ENCODE measurements at regions of chr11 and their contacts with region 1.

Region 1: GRCh38 chr11:33273656-33274055 is 16.5 kb downstream of the HIPK3 start:
- DNase-seq: no peak
- ATAC-seq: no peak
- H3K4me3 ChIP-seq: no peak overlapping the region
- H3K4me3 Mint-ChIP-seq: no peak overlapping the region
- H3K27ac ChIP-seq: no peak overlapping the region
- H3K27ac Mint-ChIP-seq: no peak overlapping the region
- H3K4me1 ChIP-seq: peaks cover 0 to 7% of the 10 kb centered on the region in 2 donors
- H3K4me1 Mint-ChIP-seq: peaks cover 43% of the 10 kb centered on the region
- H3K27me3 ChIP-seq: no peaks in the 10 kb centered on the region
- H3K27me3 Mint-ChIP-seq: no peaks in the 10 kb centered on the region
- CTCF ChIP-seq: no peak

Region 2: DNA sequence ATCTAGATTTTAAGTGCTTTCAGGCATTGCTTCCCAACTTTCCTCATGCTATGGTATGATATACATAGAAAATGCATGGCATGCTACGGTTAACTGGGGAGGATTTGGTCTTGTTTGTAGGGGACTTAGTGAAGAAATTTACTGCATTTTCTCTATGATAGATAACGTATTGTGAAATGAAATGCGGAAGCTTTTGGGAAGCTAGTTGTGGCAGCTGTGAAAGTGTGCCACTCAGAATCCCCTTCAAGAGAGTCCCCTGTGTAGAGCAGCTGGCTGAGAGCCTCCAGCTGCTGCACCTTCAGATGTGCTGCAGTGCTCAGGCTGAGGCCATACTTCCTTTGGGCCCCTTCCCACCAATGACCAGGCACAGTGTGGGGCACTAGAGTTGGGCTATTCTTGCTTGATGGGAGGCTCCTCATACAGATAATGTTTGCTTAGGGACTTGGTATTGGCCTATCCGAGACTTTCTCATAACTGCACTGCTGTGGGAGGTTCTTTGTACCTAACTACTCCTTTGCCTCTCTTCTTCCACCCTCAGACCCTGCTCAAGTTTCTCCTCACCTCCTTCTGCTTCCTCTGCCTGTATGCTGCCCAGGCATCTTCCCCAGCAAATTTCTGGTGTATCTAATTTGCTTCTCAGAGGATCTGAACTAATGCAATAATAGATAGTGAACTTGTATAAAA is 50.8 kb after region 1 on chr11:
- CTCF ChIA-PET with region 1: interaction called, 3 read pairs
- POLR2A ChIA-PET with region 1: no interaction called
- intact Hi-C with region 1: loop called (anchors 5 kb)
- DNase-seq: peak; percentile 13
- ATAC-seq: no peak
- H3K4me3 ChIP-seq: no peak overlapping the region
- H3K4me3 Mint-ChIP-seq: no peak overlapping the region
- H3K27ac ChIP-seq: no peak overlapping the region
- H3K27ac Mint-ChIP-seq: peak overlapping the region; percentile 53
- H3K4me1 ChIP-seq: peaks cover 16 to 23% of the 10 kb centered on the region in 2 donors
- H3K4me1 Mint-ChIP-seq: peaks cover 26% of the 10 kb centered on the region
- H3K27me3 ChIP-seq: no peaks in the 10 kb centered on the region
- H3K27me3 Mint-ChIP-seq: no peaks in the 10 kb centered on the region
- CTCF ChIP-seq: no peak

Region 3: DNA sequence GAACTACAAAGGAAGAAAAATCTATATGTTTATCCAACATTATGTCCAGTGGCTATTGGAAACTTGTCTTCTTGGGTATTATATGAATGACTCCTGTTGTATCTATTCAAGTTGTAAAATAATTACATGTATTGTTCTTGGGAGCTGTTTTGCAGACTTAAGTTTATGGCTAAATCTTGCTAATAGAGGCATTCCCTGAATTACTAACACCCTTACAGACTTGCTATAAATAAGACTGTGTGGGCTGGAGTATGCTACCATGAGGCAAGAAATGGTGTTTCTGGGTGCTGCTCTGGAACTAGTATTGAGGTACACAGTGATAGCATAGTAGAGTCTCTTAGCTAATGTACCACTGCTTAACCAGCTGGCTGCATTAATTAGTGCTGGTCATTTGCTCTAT is 138.6 kb after region 1 on chr11:
- CTCF ChIA-PET with region 1: no interaction called
- POLR2A ChIA-PET with region 1: no interaction called
- intact Hi-C with region 1: no loop called
- DNase-seq: no peak
- ATAC-seq: no peak
- H3K4me3 ChIP-seq: no peak overlapping the region
- H3K4me3 Mint-ChIP-seq: no peak overlapping the region
- H3K27ac ChIP-seq: no peak overlapping the region
- H3K27ac Mint-ChIP-seq: no peak overlapping the region
- H3K4me1 ChIP-seq: no peaks in the 10 kb centered on the region
- H3K4me1 Mint-ChIP-seq: no peaks in the 10 kb centered on the region
- H3K27me3 ChIP-seq: peaks cover 0 to 4% (median 2%) of the 10 kb centered on the region in 4 experiments
- H3K27me3 Mint-ChIP-seq: peaks cover 29% of the 10 kb centered on the region
- CTCF ChIP-seq: no peak

Measured in B cell (primary cell).